Activated CD4-positive, alpha-beta T cell treated with anti-CD3 and anti-CD28 coated beads, Interleukin-2, amount 10 ng/mL, durations not matched to agents 24 days and 14 days (primary cell): ENCODE measurements at regions of chr1 and their contacts with region 1.

Region 1: DNA sequence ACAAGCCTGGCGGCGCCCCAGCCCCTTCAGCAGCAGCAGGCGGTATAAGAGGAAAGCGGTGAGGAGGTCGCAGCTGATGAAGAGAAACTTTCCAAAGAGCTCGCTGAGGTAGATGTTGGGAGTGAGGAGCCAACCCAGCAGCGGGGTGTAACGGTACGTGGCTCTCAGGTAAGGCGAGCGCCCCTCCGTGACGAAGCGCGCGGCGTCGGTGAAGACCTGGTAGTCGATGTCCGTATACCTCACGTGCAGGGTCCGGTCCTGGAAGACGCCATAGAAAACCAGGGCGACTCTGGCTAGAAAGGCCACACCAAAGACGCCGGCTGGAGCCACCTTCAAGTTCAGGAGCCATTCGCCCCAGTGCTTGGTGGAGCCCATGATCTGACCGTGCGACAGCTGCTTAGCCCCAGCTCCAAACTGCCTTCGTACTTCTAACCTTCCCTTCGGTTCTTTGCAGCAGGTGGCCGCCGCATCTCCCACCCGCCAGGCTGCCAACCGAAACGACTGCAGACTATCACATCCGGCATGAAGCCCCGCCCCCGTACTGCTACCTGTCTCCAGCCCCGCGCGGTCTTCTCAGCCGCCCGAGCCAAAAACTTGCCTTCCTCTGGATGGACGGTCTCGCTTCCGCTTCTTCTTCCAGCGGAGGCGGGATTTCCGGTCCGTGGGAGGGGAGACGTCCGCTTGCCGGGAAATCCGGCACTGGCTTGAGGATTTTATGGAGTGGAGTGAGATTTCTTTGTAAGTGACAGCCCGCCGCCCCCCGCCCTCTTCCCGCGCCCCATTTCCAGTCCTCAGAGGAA is at the start of gene PIGM:
- DNase-seq: peak; percentile 98
- H3K4me3 Mint-ChIP-seq: peak within 1 kb of the TSS; percentile 92
- H3K27ac Mint-ChIP-seq: peak within 1 kb of the TSS; percentile 85
- H3K4me1 Mint-ChIP-seq: peaks cover 32% of the 10 kb centered on the region
- H3K27me3 Mint-ChIP-seq: peaks cover 15% of the 10 kb centered on the region
- total RNA-seq, gene PIGM: 5.5 and 5.8 TPM in 2 replicates

Region 2: GRCh38 chr1:159780583-159781582 is 250.7 kb before region 1 on chr1 and contains the start of gene DUSP23:
- intact Hi-C with region 1: loop called (anchors 1 kb)
- DNase-seq: peak; percentile 99
- H3K4me3 Mint-ChIP-seq: peak within 1 kb of the TSS; percentile 80
- H3K27ac Mint-ChIP-seq: peak within 1 kb of the TSS; percentile 30
- H3K4me1 Mint-ChIP-seq: peaks cover 7% of the 10 kb centered on the region
- H3K27me3 Mint-ChIP-seq: peaks cover 19% of the 10 kb centered on the region
- total RNA-seq, gene DUSP23: 30.9 and 33.0 TPM in 2 replicates

Region 3: DNA sequence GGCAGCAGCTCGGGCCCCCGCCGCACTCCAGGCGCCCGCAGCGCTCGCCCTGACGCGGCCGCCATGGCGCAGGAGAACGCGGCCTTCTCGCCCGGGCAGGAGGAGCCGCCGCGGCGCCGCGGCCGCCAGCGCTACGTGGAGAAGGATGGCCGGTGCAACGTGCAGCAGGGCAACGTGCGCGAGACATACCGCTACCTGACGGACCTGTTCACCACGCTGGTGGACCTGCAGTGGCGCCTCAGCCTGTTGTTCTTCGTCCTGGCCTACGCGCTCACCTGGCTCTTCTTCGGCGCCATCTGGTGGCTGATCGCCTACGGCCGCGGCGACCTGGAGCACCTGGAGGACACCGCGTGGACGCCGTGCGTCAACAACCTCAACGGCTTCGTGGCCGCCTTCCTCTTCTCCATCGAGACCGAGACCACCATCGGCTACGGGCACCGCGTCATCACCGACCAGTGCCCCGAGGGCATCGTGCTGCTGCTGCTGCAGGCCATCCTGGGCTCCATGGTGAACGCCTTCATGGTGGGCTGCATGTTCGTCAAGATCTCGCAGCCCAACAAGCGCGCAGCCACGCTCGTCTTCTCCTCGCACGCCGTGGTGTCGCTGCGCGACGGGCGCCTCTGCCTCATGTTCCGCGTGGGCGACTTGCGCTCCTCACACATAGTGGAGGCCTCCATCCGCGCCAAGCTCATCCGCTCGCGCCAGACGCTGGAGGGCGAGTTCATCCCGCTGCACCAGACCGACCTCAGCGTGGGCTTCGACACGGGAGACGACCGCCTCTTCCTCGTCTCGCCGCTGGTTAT is 52.6 kb after region 1 on chr1:
- intact Hi-C with region 1: loop called (anchors 5 kb)
- DNase-seq: peak; percentile 93
- H3K4me3 Mint-ChIP-seq: peak overlapping the region; percentile 51
- H3K27ac Mint-ChIP-seq: no peak overlapping the region
- H3K4me1 Mint-ChIP-seq: peaks cover 19% of the 10 kb centered on the region
- H3K27me3 Mint-ChIP-seq: peaks cover 34% of the 10 kb centered on the region

Region 4: GRCh38 chr1:160205242-160206035 is 173.9 kb after region 1 on chr1 and contains the start of gene PEA15:
- intact Hi-C with region 1: loop called (anchors 5 kb)
- DNase-seq: peak; percentile 92
- H3K4me3 Mint-ChIP-seq: peak within 1 kb of the TSS; percentile 91
- H3K27ac Mint-ChIP-seq: peak within 1 kb of the TSS; percentile 91
- H3K4me1 Mint-ChIP-seq: peaks cover 40% of the 10 kb centered on the region
- H3K27me3 Mint-ChIP-seq: no peaks in the 10 kb centered on the region
- total RNA-seq, gene PEA15: 70.2 and 70.9 TPM in 2 replicates

Region 5: DNA sequence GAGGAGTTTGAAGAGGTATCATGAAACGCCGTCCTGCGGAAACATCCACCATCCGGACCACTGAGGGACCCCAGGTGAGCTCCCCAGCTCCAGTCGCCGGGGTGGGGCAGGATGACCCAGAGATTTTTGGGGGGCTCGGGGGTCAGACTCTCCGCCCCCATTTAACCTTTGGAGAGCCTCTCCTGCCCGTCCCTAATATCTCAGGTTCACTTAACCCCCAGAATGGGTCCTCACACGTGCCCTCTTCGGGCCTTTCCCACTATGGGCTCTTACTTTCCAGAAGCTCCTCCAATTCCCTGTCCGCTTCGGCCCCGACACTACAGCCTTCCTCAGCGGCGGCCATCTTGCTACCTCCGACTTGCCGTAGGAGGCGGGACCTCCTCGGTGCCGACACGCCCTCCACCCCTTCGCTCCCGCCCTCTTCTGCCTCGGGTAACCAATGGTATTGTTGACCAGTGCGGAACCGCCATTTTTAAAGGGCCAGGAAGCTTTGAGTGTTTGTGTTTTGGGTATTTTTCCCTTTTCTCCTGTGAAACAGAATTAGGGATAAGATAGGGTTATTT is 253.3 kb after region 1 on chr1 and contains the start of gene PEX19:
- intact Hi-C with region 1: no loop called
- DNase-seq: peak; percentile 99
- H3K4me3 Mint-ChIP-seq: peak within 1 kb of the TSS; percentile 100
- H3K27ac Mint-ChIP-seq: peak within 1 kb of the TSS; percentile 90
- H3K4me1 Mint-ChIP-seq: peaks cover 21% of the 10 kb centered on the region
- H3K27me3 Mint-ChIP-seq: no peaks in the 10 kb centered on the region
- total RNA-seq, gene PEX19: 51.8 and 60.2 TPM in 2 replicates